ENCODE measurements at regions of chr10 and their contacts with region 1.

Region 1: DNA sequence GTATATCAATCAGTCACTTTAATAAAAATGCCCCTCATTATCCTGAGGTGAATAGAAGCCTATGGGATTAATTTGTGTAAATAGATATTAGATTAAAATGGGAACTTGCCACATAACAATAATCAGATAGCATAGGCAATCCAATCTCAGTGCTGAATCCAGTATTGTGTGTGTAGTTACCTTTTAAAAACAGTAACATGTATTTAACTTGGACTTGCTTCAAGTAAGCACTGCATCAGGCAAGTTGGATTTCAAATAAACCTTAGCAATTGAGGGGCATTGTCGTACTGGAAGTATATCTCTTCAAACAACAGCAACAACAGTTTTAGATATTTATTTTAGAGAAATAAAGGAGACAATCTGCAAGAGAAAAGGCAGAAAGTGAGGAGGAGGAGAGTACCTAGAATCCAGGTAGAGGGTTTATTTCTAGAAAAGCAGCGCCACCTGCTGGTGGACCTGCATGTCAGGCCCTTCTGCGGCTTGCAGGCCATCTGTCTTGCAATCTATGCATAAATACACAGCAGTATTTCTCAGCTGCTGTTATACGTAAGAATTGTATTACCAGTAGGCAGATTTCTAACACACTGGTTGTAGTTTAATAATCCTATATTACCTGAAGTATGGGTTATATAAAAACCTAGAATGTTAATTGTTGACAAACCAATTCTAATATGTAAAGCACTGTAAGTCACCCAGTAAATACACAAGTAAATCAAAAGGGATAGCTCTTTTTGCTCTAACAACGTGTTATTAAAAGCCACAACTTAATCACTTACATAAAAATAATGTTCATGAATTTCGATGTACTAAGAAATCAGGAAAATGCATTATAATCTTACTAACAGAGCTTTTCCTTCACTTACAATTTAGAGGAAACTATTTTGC is 652.8 kb downstream of the KCNMA1 start:
- DNase-seq: peak; percentile 23 to 76 (median 62)
- ATAC-seq: peak; percentile 34
- H3K4me3 ChIP-seq: no peak overlapping the region
- H3K4me3 Mint-ChIP-seq: no peak overlapping the region
- H3K27ac ChIP-seq: no peak overlapping the region
- H3K27ac Mint-ChIP-seq: no peak overlapping the region
- H3K4me1 ChIP-seq: no peaks in the 10 kb centered on the region
- H3K4me1 Mint-ChIP-seq: no peaks in the 10 kb centered on the region
- H3K27me3 ChIP-seq: no peaks in the 10 kb centered on the region
- H3K27me3 Mint-ChIP-seq: no peaks in the 10 kb centered on the region
- CTCF ChIP-seq: peak; percentile 92

Region 2: GRCh38 chr10:77004917-77005564 is 20.2 kb after region 1 on chr10:
- CTCF ChIA-PET with region 1: interaction called, 10 read pairs
- POLR2A ChIA-PET with region 1: no interaction called
- intact Hi-C with region 1: no loop called
- DNase-seq: peak in 2 of 9 experiments; percentile 10 to 13
- ATAC-seq: no peak
- H3K4me3 ChIP-seq: no peak overlapping the region
- H3K4me3 Mint-ChIP-seq: no peak overlapping the region
- H3K27ac ChIP-seq: no peak overlapping the region
- H3K27ac Mint-ChIP-seq: no peak overlapping the region
- H3K4me1 ChIP-seq: no peaks in the 10 kb centered on the region
- H3K4me1 Mint-ChIP-seq: no peaks in the 10 kb centered on the region
- H3K27me3 ChIP-seq: no peaks in the 10 kb centered on the region
- H3K27me3 Mint-ChIP-seq: peaks cover 4% of the 10 kb centered on the region
- CTCF ChIP-seq: peak; percentile 40